GM12878 (cell line): ENCODE measurements at regions of chr1 and their contacts with region 1.

Region 1: DNA sequence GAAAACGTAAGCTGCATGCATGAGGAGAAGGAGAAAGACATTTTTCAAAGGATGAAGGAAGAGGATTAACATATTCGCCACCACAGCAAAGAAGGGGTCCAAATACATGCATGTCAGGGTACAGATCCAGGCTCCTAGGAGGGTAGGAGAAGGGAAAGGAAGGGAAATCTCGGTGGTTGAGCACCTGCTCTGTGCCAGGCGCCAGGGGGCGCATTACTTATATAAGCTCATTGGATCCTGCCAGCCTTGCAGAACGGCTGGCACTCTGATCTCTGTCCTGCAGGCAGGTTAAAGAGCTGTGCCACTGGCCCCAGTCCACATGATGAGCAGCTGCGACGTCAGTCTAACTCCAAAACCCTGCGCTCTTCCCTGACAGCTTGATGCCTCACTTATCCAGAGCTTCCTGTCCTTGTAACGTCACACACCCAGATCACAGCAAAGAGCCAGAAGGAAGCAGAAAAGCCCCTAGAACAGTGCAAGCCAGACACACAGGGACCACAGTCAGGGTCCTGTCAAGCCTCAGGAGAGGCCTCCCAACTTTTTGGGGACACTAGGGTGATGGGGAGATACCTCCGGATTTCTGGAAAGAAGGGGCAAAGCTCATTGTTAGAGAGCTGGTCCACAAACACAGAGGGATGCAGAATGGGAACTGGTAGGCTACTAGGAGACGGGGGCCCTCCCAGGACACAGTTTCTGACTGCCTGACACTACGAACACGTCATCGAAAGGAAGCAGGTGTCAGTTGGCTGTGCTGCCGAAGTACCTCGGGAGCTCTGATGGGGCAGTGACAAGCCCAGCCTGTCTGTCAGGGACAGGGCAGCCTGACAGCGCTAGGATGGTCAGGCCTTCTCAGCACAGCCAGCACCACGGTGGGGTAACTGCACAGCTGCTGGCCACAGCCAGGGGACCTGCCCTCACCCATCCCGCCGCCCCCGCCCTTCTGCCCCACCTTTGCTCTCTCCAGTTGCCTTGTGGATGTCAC is 99.1 kb downstream of the BEND5 start:
- DNase-seq: no peak
- ATAC-seq: peak; percentile 83
- H3K4me3 ChIP-seq: no peak overlapping the region
- H3K27ac ChIP-seq: no peak overlapping the region
- H3K4me1 ChIP-seq: no peaks in the 10 kb centered on the region; the same call in 1 of the 2 replicates
- H3K27me3 ChIP-seq: peaks cover 0 to 4% of the 10 kb centered on the region in 2 experiments; a peak in 2 of 4 replicates
- CTCF ChIP-seq: peak; percentile 59 to 71 (median 70)
- EP300 ChIP-seq: no peak
- POLR2A ChIP-seq: no peak
- RAD21 ChIP-seq: peak; percentile 39

Region 2: DNA sequence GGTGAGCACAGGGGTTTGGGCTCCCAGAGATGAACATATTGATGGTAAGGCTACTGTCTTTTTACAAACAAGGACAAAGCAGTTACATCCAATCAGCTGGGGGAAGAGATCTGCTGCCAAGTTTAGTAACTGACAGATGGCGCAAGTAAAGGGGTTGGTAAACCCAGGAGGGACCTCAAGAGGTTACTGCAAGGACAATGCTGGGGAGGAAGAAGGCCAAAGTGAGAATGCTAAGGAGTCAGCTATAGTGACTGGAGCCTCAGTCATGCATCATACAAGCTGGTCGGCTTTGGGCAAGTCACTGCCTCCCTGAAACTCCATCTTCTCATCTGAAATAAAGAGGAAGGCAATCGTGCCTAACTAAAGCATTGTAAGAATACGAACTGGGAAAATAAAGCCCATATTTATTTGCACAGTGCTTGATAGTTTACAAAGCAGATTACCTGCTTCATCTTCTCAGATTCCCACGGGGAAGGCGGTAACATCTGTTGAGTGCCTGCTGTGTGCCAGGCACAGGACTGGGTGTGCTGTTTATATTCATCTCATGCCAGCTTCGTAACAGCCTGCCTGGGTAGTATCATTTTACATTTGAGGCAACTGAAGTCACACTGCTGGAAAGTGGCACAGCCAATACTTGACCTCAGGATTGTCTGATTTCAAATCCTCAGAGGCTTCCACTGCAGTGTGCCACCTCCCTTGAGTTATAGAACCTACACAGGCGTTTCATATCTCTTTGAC is 15.7 kb before region 1 on chr1:
- CTCF ChIA-PET with region 1: interaction called, 18 read pairs
- POLR2A ChIA-PET with region 1: no interaction called
- RAD21 ChIA-PET with region 1: no interaction called
- SMC1A ChIA-PET with region 1: interaction called, 11 read pairs
- in situ Hi-C with region 1: no loop called
- intact Hi-C with region 1: no loop called
- DNase-seq: no peak
- ATAC-seq: no peak
- H3K4me3 ChIP-seq: no peak overlapping the region
- H3K27ac ChIP-seq: no peak overlapping the region
- H3K4me1 ChIP-seq: no peaks in the 10 kb centered on the region
- H3K27me3 ChIP-seq: no peaks in the 10 kb centered on the region; a peak in 1 of 4 replicates
- CTCF ChIP-seq: no peak
- EP300 ChIP-seq: no peak
- POLR2A ChIP-seq: no peak
- RAD21 ChIP-seq: no peak

Region 3: GRCh38 chr1:48688102-48688760 is 10.6 kb after region 1 on chr1:
- CTCF ChIA-PET with region 1: interaction called, 30 read pairs
- POLR2A ChIA-PET with region 1: no interaction called
- RAD21 ChIA-PET with region 1: interaction called, 7 read pairs
- SMC1A ChIA-PET with region 1: interaction called, 7 read pairs
- in situ Hi-C with region 1: no loop called
- intact Hi-C with region 1: no loop called
- DNase-seq: no peak
- ATAC-seq: peak; percentile 86
- H3K4me3 ChIP-seq: no peak overlapping the region
- H3K27ac ChIP-seq: no peak overlapping the region
- H3K4me1 ChIP-seq: no peaks in the 10 kb centered on the region
- H3K27me3 ChIP-seq: no peaks in the 10 kb centered on the region
- CTCF ChIP-seq: peak; percentile 10 to 41 (median 28); a peak in 4 of 6 replicates
- EP300 ChIP-seq: no peak
- POLR2A ChIP-seq: no peak
- RAD21 ChIP-seq: peak; percentile 20; the same call in 1 of the 2 replicates

Region 4: DNA sequence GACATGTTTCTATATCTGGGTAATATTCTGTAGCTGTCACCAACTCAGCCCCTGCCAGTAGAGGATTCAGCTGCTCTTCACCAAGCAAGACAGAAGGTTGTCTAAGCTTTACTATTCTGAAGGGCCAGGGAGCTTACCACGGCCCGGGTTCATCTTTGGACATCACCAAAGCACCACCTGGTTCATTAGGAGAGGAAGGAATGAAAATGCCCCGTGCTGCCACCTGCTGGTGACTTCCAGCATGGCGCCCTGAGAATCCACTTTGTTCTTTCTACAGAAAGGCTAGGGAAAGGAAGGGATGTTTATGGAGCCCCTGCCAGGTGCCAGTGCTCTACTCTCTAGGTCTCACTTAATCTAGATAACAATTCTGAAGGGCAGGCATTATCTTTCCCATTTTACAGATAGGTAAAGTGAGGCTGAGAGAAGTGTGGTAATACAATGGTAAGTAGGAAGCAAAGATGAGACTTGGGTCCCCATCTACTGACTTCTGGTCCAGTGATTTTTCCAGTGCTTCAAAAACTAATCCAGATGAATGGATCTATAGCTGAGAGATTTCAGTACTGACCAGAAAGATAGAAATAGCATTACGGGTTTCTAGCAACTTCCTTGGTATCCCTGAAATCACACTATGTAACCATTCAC is 19.6 kb after region 1 on chr1:
- CTCF ChIA-PET with region 1: interaction called, 65 read pairs
- POLR2A ChIA-PET with region 1: interaction called, 3 read pairs
- RAD21 ChIA-PET with region 1: interaction called, 14 read pairs
- SMC1A ChIA-PET with region 1: interaction called, 3 read pairs
- in situ Hi-C with region 1: no loop called
- intact Hi-C with region 1: no loop called
- DNase-seq: no peak
- ATAC-seq: peak; percentile 85
- H3K4me3 ChIP-seq: no peak overlapping the region
- H3K27ac ChIP-seq: no peak overlapping the region
- H3K4me1 ChIP-seq: no peaks in the 10 kb centered on the region
- H3K27me3 ChIP-seq: no peaks in the 10 kb centered on the region
- CTCF ChIP-seq: peak; percentile 81 to 89 (median 87)
- EP300 ChIP-seq: no peak
- POLR2A ChIP-seq: no peak
- RAD21 ChIP-seq: peak; percentile 46

Region 5: GRCh38 chr1:48718116-48718630 is 40.6 kb after region 1 on chr1:
- CTCF ChIA-PET with region 1: no interaction called
- POLR2A ChIA-PET with region 1: no interaction called
- RAD21 ChIA-PET with region 1: no interaction called
- SMC1A ChIA-PET with region 1: no interaction called
- in situ Hi-C with region 1: no loop called
- intact Hi-C with region 1: no loop called
- DNase-seq: no peak
- ATAC-seq: no peak
- H3K4me3 ChIP-seq: no peak overlapping the region
- H3K27ac ChIP-seq: no peak overlapping the region
- H3K4me1 ChIP-seq: no peaks in the 10 kb centered on the region
- H3K27me3 ChIP-seq: no peaks in the 10 kb centered on the region; a peak in 1 of 4 replicates
- CTCF ChIP-seq: no peak
- EP300 ChIP-seq: no peak
- POLR2A ChIP-seq: no peak
- RAD21 ChIP-seq: 0 out of 2 replicates have a peak, but pooled peaks have one; percentile 27

Region 6: DNA sequence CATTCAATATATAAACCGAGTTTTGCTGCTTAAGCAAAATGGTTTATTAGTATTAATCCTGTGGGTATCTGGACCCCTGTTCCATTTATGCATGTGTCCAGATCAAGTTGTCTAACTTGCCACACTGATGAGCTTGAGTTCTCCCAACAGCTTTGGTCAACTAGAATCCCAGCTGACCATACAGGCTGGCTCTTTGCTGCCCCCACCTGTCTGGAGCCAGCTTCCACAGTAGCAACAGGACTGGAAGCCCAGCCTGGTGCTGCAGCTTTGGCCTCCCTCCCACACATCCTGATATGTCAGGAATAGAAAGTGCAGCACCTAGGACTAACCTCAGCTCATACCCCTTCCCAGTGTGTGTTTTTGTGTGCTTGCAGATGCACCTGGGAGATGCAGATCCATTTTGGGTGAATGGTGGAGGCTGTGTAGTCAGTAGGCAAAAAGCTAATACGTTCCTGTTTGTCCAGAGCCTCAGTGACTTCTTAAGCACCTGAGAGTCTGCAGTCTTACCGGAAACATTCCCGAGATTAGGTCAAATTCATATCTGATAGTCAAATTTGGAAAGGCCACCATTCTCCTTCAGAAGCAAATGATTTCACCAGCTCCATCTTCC is 140.0 kb after region 1 on chr1:
- CTCF ChIA-PET with region 1: interaction called, 77 read pairs
- POLR2A ChIA-PET with region 1: interaction called, 3 read pairs
- RAD21 ChIA-PET with region 1: interaction called, 37 read pairs
- SMC1A ChIA-PET with region 1: interaction called, 22 read pairs
- in situ Hi-C with region 1: no loop called
- intact Hi-C with region 1: loop called (anchors 1 kb)
- DNase-seq: no peak
- ATAC-seq: peak; percentile 83
- H3K4me3 ChIP-seq: no peak overlapping the region
- H3K27ac ChIP-seq: no peak overlapping the region
- H3K4me1 ChIP-seq: no peaks in the 10 kb centered on the region
- H3K27me3 ChIP-seq: no peaks in the 10 kb centered on the region
- CTCF ChIP-seq: peak; percentile 66 to 78 (median 77)
- EP300 ChIP-seq: no peak
- POLR2A ChIP-seq: no peak
- RAD21 ChIP-seq: peak; percentile 81

Region 7: DNA sequence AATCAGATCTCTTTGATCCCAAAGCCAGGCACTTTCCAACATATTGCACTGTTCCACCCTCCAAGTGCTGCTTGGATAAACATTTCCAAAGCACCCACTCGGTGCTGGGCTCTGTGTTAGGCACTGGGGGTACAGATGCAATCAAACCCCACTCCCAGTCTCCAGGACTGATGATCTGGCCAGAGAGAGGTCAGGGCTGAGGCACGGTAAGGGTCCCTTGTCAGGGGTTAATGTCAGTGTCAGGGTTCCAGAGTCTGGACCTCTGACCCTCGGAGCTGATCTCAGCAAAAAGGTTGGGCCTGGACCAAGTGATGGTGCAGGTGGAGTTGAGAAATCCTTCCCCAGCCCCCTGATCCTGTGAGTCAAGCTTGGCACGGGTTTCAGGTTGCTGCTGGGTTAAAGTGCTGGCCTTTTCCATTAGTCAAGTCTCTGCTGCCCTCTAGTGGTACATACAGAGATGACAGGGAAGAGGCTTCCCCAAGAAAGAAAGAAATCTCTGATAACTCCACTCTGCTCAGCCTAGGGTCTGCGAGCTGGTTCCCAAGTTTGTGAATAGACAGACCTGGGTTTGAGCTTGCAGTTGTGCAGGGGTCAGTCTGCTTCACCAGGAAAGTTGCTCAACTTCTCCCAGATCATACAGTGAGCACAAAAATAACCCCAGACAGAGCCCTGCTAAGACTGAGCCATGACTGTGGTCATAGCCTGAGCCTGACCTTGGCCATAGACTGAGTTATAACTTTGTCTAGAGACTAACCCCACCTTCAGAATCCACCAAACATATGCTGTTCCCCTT is 1671.0 kb after region 1 on chr1:
- CTCF ChIA-PET with region 1: interaction called, 8 read pairs
- POLR2A ChIA-PET with region 1: no interaction called
- RAD21 ChIA-PET with region 1: interaction called, 6 read pairs
- SMC1A ChIA-PET with region 1: interaction called, 4 read pairs
- in situ Hi-C with region 1: loop called (anchors 5 kb)
- intact Hi-C with region 1: no loop called
- DNase-seq: no peak
- ATAC-seq: peak; percentile 91
- H3K4me3 ChIP-seq: no peak overlapping the region
- H3K27ac ChIP-seq: no peak overlapping the region
- H3K4me1 ChIP-seq: no peaks in the 10 kb centered on the region
- H3K27me3 ChIP-seq: no peaks in the 10 kb centered on the region
- CTCF ChIP-seq: peak; percentile 75 to 86 (median 83)
- EP300 ChIP-seq: no peak
- POLR2A ChIP-seq: no peak
- RAD21 ChIP-seq: peak; percentile 84